ENCODE measurements at regions of chr2 and their contacts with region 1.

Region 1: GRCh38 chr2:219642465-219643080 is 15.1 kb downstream of the SLC4A3 start:
- DNase-seq: peak; percentile 99
- H3K4me3 ChIP-seq: no peak overlapping the region
- H3K27ac ChIP-seq: peak overlapping the region; percentile 61 to 78 (median 64)
- H3K4me1 ChIP-seq: peaks cover 27 to 39% (median 32%) of the 10 kb centered on the region in 4 donors
- H3K27me3 ChIP-seq: no peaks in the 10 kb centered on the region
- CTCF ChIP-seq: peak; percentile 96 to 100 (median 99)
- EP300 ChIP-seq: no peak
- POLR2A ChIP-seq: no peak

Region 2: DNA sequence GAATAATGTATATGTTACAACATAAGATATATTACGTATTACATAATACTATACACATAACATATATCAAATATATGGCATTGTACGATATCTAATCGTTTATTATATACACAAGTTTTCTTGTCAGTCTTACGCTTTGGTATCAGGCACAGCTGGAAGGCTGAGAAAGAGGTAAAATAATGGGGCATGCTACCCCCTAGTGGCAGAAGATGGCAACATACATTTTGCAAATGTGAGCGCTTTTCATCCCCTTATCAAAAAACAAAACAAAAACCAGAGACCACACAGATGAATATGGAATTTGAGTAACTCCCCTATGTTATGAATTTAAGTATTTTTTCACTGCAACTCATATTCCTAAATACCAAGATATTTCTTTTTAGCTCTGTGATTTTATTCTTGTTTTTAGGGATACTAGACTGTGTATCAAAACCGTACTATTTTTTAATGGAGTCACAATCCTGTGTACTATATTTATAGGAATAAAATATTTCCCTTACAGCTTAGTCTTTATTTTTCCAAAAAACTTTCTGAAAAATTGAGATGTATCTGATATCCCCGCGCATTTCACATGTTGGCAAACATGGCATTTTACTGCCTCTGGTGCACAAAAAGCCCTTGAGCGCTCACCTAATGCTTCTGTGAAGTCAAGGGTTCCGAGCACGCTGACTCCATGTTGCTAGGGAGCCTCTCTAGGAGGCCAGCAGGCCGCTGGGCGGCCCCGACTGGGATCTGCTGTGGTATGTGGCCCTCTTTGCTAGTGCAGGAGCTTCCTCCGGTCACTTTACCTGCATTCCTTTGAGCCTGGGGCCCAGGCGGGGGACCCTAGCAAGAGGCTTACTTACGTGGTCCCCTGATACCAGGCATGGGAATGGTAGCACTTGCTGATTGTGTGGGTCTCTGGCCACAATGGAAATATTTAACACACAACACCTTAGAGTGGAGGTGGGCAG is 47.4 kb after region 1 on chr2:
- intact Hi-C with region 1: loop called (anchors 2 kb)
- DNase-seq: no peak
- H3K4me3 ChIP-seq: no peak overlapping the region
- H3K27ac ChIP-seq: peak overlapping the region in 1 of 4 donors; percentile 29
- H3K4me1 ChIP-seq: peaks cover 7 to 18% (median 16%) of the 10 kb centered on the region in 4 donors
- H3K27me3 ChIP-seq: peaks cover 0 to 16% (median 0%) of the 10 kb centered on the region in 4 donors
- CTCF ChIP-seq: peak; percentile 76 to 85 (median 78)
- EP300 ChIP-seq: no peak
- POLR2A ChIP-seq: no peak